Adrenal gland (tissue), 19 donors: ENCODE measurements at regions of chr16 and their contacts with region 1.

Region 1: GRCh38 chr16:66608241-66609138 is 4.0 kb downstream of the CMTM3 start:
- DNase-seq: peak; percentile 87 to 95 (median 92)
- H3K4me3 ChIP-seq: no peak overlapping the region
- H3K27ac ChIP-seq: no peak overlapping the region
- H3K4me1 ChIP-seq: peaks cover 0 to 11% of the 10 kb centered on the region in 2 donors
- H3K27me3 ChIP-seq: no peaks in the 10 kb centered on the region
- CTCF ChIP-seq: peak; percentile 78 to 91 (median 87)
- POLR2A ChIP-seq: no peak

Region 2: GRCh38 chr16:66275775-66276428 is 332.6 kb before region 1 on chr16:
- intact Hi-C with region 1: no loop called
- DNase-seq: peak in 5 of 7 donors; percentile 21 to 72 (median 58)
- H3K4me3 ChIP-seq: no peak overlapping the region
- H3K27ac ChIP-seq: no peak overlapping the region
- H3K4me1 ChIP-seq: no peaks in the 10 kb centered on the region
- H3K27me3 ChIP-seq: no peaks in the 10 kb centered on the region
- CTCF ChIP-seq: peak; percentile 35 to 63 (median 56)
- POLR2A ChIP-seq: no peak

Region 3: DNA sequence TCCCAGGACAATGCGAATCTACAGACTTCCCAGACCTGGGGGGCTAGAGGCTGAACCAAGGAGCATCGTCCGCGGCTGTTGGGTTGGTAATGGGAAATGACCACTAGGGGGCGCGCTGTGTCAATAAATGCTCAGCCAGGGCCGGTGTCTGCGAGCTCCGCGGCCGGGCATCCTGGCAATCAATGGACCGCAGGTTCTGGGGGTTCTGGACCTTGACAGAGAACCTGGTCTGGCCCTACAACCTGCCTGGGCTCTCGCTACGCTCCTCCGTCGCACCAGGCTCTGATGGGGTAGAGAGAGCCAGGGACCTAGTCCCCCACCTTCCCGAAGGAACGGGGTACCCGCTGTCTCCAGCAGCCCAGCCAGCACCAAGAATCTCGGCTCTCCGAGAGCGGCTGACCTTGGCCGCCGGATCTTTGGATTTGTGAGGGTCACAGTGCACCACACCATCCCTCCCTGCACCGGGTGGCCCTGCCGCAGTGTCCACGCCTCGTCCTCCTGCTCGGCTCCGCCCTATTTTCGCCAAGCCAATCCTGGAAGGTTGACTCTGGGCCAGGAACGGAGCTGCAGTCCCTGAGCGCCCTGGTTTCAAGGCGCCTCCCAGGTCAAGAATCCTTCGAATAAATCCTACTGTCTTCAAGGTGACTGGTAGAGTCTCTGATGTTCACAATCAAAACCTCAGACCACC is 201.8 kb before region 1 on chr16:
- intact Hi-C with region 1: loop called (anchors 5 to 10 kb)
- DNase-seq: peak; percentile 74 to 94 (median 87)
- H3K4me3 ChIP-seq: peak overlapping the region in 2 of 4 donors; percentile 20 to 59
- H3K27ac ChIP-seq: peak overlapping the region in 1 of 5 donors; percentile 54
- H3K4me1 ChIP-seq: peaks cover 3 to 17% of the 10 kb centered on the region in 2 donors
- H3K27me3 ChIP-seq: no peaks in the 10 kb centered on the region
- CTCF ChIP-seq: peak; percentile 86 to 95 (median 92)
- POLR2A ChIP-seq: no peak

Region 4: GRCh38 chr16:66483689-66484481 is 124.6 kb before region 1 on chr16:
- intact Hi-C with region 1: loop called (anchors 5 to 10 kb)
- DNase-seq: peak; percentile 67 to 86 (median 79)
- H3K4me3 ChIP-seq: no peak overlapping the region
- H3K27ac ChIP-seq: no peak overlapping the region
- H3K4me1 ChIP-seq: peaks cover 0 to 11% of the 10 kb centered on the region in 2 donors
- H3K27me3 ChIP-seq: no peaks in the 10 kb centered on the region
- CTCF ChIP-seq: peak; percentile 86 to 91 (median 88)
- POLR2A ChIP-seq: no peak

Region 5: GRCh38 chr16:66552286-66553177 is 56.0 kb before region 1 on chr16 and contains the start of gene CKLF:
- intact Hi-C with region 1: loop called in 1 of 2 experiments (anchors 5 kb)
- DNase-seq: peak; percentile 86 to 95 (median 89)
- H3K4me3 ChIP-seq: peak within 1 kb of the TSS; percentile 34 to 83 (median 71)
- H3K27ac ChIP-seq: peak within 1 kb of the TSS; percentile 65 to 96 (median 91)
- H3K4me1 ChIP-seq: peaks cover 25 to 51% of the 10 kb centered on the region in 2 donors
- H3K27me3 ChIP-seq: no peaks in the 10 kb centered on the region
- CTCF ChIP-seq: no peak
- POLR2A ChIP-seq: peak; percentile 61 to 86
- total RNA-seq, gene CKLF: 19.6 to 67.9 (median 44.3) TPM

Region 6: GRCh38 chr16:66728117-66728787 is 119.8 kb after region 1 on chr16:
- intact Hi-C with region 1: loop called in 1 of 2 experiments (anchors 10 kb)
- DNase-seq: peak; percentile 50 to 79 (median 63)
- H3K4me3 ChIP-seq: no peak overlapping the region
- H3K27ac ChIP-seq: peak overlapping the region in 1 of 5 donors; percentile 9
- H3K4me1 ChIP-seq: peaks cover 0 to 4% of the 10 kb centered on the region in 2 donors
- H3K27me3 ChIP-seq: no peaks in the 10 kb centered on the region
- CTCF ChIP-seq: peak; percentile 60 to 81 (median 65)
- POLR2A ChIP-seq: no peak

Region 7: DNA sequence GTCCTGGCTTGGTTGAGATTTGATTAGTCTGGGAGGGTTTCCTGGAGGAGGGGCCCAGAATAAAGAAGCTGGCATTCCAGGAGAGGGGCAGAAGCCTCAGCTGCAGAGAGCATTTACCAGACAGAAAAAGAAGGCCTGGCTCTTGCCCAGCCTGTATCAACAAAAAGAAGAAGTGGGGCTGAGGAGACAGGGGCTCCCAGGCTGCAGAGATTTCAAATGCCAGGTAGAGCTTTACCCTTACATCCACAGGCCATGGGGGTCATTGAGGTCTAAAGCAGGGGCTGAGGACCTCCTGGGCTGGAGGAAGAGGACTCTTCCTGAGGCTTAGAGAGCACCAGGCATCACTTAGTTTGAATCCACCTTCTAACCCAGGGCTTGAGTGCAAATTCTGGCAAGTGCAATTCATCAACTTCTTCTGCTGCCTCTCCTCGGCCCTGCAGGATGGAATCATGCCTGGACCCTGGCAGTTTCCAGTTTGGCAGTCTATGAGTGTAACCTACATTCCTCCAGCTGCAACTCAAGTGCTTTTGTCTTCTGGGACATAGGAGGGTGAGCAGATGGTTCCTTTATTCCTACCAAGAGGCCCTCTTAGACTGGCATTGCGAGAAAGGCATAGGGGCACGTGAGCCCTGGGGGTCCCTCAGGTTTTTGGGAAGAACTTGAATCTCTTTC is 251.0 kb after region 1 on chr16:
- intact Hi-C with region 1: loop called in 1 of 2 experiments (anchors 10 kb)
- DNase-seq: no peak
- H3K4me3 ChIP-seq: no peak overlapping the region
- H3K27ac ChIP-seq: no peak overlapping the region
- H3K4me1 ChIP-seq: peaks cover 0 to 5% of the 10 kb centered on the region in 2 donors
- H3K27me3 ChIP-seq: no peaks in the 10 kb centered on the region
- CTCF ChIP-seq: no peak
- POLR2A ChIP-seq: no peak